ENCODE measurements at regions of chr3 and their contacts with region 1.

Region 1: GRCh38 chr3:108757404-108757982 is at the start of gene RETNLB:
- DNase-seq: no peak
- H3K4me3 ChIP-seq: no peak within 1 kb of the TSS
- CTCF ChIP-seq: no peak

Region 2: GRCh38 chr3:108806316-108806715 is 48.8 kb after region 1 on chr3:
- in situ Hi-C with region 1: no loop called
- DNase-seq: no peak
- H3K4me3 ChIP-seq: no peak overlapping the region
- CTCF ChIP-seq: no peak

Region 3: GRCh38 chr3:108822123-108822897 is 64.8 kb after region 1 on chr3 and contains the start of gene TRAT1:
- in situ Hi-C with region 1: loop called (anchors 5 kb)
- DNase-seq: no peak
- H3K4me3 ChIP-seq: no peak within 1 kb of the TSS
- CTCF ChIP-seq: no peak

Region 4: DNA sequence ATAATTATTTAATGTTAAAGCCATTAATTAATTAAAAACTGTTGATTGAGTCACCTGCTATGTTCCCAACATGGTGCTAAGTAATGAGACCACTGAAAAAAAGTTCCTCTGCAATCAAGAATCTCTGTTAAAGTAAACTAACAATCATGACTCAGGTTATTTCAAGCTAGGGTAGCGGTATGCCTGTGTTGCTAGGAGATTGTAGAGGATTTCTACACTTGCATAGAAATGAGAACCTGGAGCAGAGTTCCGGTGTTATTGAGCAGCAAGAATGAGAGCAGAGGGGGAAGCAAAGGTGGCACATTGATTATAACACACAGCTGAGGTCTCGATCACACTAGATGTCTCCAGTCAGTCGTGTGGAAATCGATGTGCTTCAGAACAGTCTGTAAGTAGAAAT is 420.4 kb after region 1 on chr3:
- in situ Hi-C with region 1: no loop called
- DNase-seq: no peak
- H3K4me3 ChIP-seq: no peak overlapping the region
- CTCF ChIP-seq: no peak

Measured in astrocyte of the cerebellum (primary cell).